ENCODE measurements at regions of chr13 and their contacts with region 1.

Region 1: DNA sequence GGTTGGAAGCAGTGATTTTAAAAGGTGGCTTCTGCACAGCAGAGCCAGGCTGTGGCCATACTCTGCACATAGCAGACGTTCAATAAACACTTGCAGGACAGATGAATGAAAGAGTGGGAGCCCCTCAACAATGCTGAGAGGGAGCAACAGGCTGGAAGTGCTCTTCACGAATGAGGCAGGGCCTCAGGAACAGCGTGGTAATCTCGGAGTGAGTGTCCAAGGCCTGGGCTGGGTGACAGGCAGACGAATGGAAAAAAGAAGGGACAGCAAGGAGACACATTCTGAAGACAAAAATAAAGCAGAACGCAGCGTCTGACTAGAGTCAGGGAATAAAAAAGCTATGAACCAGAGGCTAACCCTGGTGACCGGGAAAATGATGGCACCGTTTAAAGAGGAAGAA is 11.1 kb downstream of the GJA3 start:
- DNase-seq: no peak
- ATAC-seq: no peak
- H3K4me3 ChIP-seq: no peak overlapping the region
- H3K4me3 Mint-ChIP-seq: no peak overlapping the region
- H3K27ac ChIP-seq: no peak overlapping the region
- H3K27ac Mint-ChIP-seq: no peak overlapping the region
- H3K4me1 ChIP-seq: no peaks in the 10 kb centered on the region
- H3K4me1 Mint-ChIP-seq: no peaks in the 10 kb centered on the region
- H3K27me3 ChIP-seq: peaks cover 9 to 10% of the 10 kb centered on the region in 2 experiments
- H3K27me3 Mint-ChIP-seq: peaks cover 77% of the 10 kb centered on the region
- CTCF ChIP-seq: no peak

Region 2: DNA sequence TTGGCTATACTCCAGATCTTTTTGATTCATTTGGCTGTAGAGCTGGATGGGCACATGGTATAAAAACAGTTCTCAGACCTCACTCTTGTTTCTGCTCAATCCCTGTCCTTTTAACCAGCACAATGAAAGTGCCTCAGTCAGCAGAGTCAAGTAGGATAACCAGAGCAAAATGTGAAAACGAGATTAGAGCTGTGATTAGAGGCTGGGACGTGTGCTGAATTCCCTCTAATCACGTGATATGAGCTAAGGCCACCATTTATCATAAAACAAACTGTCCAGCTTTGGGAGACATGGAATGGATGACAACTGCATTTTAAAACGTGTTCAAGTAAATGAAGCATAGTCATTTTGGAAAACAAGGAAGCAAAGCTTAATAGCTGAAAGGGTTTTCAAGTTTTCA is 43.0 kb before region 1 on chr13:
- CTCF ChIA-PET with region 1: no interaction called
- POLR2A ChIA-PET with region 1: no interaction called
- intact Hi-C with region 1: loop called in 1 of 2 experiments (anchors 5 kb)
- DNase-seq: no peak
- ATAC-seq: no peak
- H3K4me3 ChIP-seq: no peak overlapping the region
- H3K4me3 Mint-ChIP-seq: no peak overlapping the region
- H3K27ac ChIP-seq: no peak overlapping the region
- H3K27ac Mint-ChIP-seq: no peak overlapping the region
- H3K4me1 ChIP-seq: no peaks in the 10 kb centered on the region
- H3K4me1 Mint-ChIP-seq: no peaks in the 10 kb centered on the region
- H3K27me3 ChIP-seq: peaks cover 0 to 12% of the 10 kb centered on the region in 2 experiments
- H3K27me3 Mint-ChIP-seq: peaks cover 40% of the 10 kb centered on the region
- CTCF ChIP-seq: no peak

Measured in CD4-positive, alpha-beta T cell (primary cell).